ENCODE measurements at regions of chr1 and their contacts with region 1.

Region 1: DNA sequence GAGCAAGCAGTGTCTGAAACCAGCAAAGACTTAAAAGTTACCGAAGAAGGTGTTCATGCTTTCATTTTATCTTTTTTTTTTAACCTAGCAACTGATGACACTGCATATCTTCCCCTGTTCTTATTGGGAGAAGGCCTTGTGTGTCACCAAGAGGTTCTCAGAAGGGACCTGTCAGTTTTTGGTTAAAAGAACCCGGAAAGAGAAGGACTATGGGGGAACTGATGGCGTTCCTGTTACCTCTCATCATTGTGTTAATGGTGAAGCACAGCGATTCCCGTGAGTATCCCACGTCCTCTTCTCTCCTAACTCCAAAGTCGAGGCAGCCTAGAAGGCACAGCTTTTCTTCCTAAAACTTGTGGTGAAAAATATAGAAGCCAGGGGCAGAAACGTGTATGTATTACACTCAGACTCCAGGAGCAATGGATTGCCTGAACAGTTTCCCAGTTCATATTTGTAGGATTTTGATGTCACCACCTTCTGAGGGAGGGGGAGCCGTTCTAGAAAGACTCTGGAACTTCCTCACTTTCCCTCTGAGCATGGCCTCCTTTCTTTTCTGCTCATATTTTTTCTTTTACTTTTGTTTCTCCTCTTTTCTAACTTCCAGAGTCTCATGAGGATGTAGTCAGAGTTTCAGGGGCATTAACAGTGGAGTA is at the start of gene MR1:
- DNase-seq: peak; percentile 92
- ATAC-seq: peak; percentile 97
- H3K4me3 ChIP-seq: peak within 1 kb of the TSS; percentile 77 to 94 (median 90)
- H3K4me3 Mint-ChIP-seq: peak within 1 kb of the TSS; percentile 95
- H3K27ac ChIP-seq: peak within 1 kb of the TSS; percentile 94 to 96
- H3K27ac Mint-ChIP-seq: peak within 1 kb of the TSS; percentile 93
- H3K4me1 ChIP-seq: peaks cover 39 to 49% of the 10 kb centered on the region in 2 donors
- H3K4me1 Mint-ChIP-seq: peaks cover 54% of the 10 kb centered on the region
- H3K27me3 ChIP-seq: no peaks in the 10 kb centered on the region
- H3K27me3 Mint-ChIP-seq: no peaks in the 10 kb centered on the region
- CTCF ChIP-seq: no peak
- total RNA-seq, gene MR1: 26.1 and 28.2 TPM in 2 replicates

Region 2: GRCh38 chr1:180988253-180988752 is 45.6 kb before region 1 on chr1:
- CTCF ChIA-PET with region 1: no interaction called
- POLR2A ChIA-PET with region 1: no interaction called
- intact Hi-C with region 1: no loop called
- DNase-seq: no peak
- ATAC-seq: no peak
- H3K4me3 ChIP-seq: no peak overlapping the region
- H3K4me3 Mint-ChIP-seq: no peak overlapping the region
- H3K27ac ChIP-seq: no peak overlapping the region
- H3K27ac Mint-ChIP-seq: no peak overlapping the region
- H3K4me1 ChIP-seq: no peaks in the 10 kb centered on the region
- H3K4me1 Mint-ChIP-seq: no peaks in the 10 kb centered on the region
- H3K27me3 ChIP-seq: no peaks in the 10 kb centered on the region
- H3K27me3 Mint-ChIP-seq: no peaks in the 10 kb centered on the region
- CTCF ChIP-seq: no peak

Region 3: GRCh38 chr1:181077576-181078242 is 43.8 kb after region 1 on chr1:
- CTCF ChIA-PET with region 1: interaction called, 12 read pairs
- POLR2A ChIA-PET with region 1: no interaction called
- intact Hi-C with region 1: no loop called
- DNase-seq: no peak
- ATAC-seq: no peak
- H3K4me3 ChIP-seq: no peak overlapping the region
- H3K4me3 Mint-ChIP-seq: no peak overlapping the region
- H3K27ac ChIP-seq: no peak overlapping the region
- H3K27ac Mint-ChIP-seq: no peak overlapping the region
- H3K4me1 ChIP-seq: peaks cover 4% of the 10 kb centered on the region in 2 donors
- H3K4me1 Mint-ChIP-seq: peaks cover 4% of the 10 kb centered on the region
- H3K27me3 ChIP-seq: peaks cover 0 to 7% (median 0%) of the 10 kb centered on the region in 4 experiments
- H3K27me3 Mint-ChIP-seq: peaks cover 29% of the 10 kb centered on the region
- CTCF ChIP-seq: no peak

Region 4: GRCh38 chr1:181134543-181135362 is 100.8 kb after region 1 on chr1:
- CTCF ChIA-PET with region 1: interaction called, 119 read pairs
- POLR2A ChIA-PET with region 1: interaction called, 3 read pairs
- intact Hi-C with region 1: no loop called
- DNase-seq: peak; percentile 77
- ATAC-seq: peak; percentile 53
- H3K4me3 ChIP-seq: peak overlapping the region in 4 of 5 experiments; percentile 11 to 42 (median 17)
- H3K4me3 Mint-ChIP-seq: peak overlapping the region; percentile 86
- H3K27ac ChIP-seq: peak overlapping the region; percentile 91 to 92
- H3K27ac Mint-ChIP-seq: peak overlapping the region; percentile 99
- H3K4me1 ChIP-seq: peaks cover 77 to 85% of the 10 kb centered on the region in 2 donors
- H3K4me1 Mint-ChIP-seq: peaks cover 95% of the 10 kb centered on the region
- H3K27me3 ChIP-seq: no peaks in the 10 kb centered on the region
- H3K27me3 Mint-ChIP-seq: no peaks in the 10 kb centered on the region
- CTCF ChIP-seq: no peak

Region 5: GRCh38 chr1:181160998-181161870 is 127.3 kb after region 1 on chr1:
- CTCF ChIA-PET with region 1: interaction called, 17 read pairs
- POLR2A ChIA-PET with region 1: no interaction called
- intact Hi-C with region 1: loop called (anchors 1 kb)
- DNase-seq: no peak
- ATAC-seq: no peak
- H3K4me3 ChIP-seq: no peak overlapping the region
- H3K4me3 Mint-ChIP-seq: no peak overlapping the region
- H3K27ac ChIP-seq: no peak overlapping the region
- H3K27ac Mint-ChIP-seq: no peak overlapping the region
- H3K4me1 ChIP-seq: peaks cover 6 to 15% of the 10 kb centered on the region in 2 donors
- H3K4me1 Mint-ChIP-seq: peaks cover 8% of the 10 kb centered on the region
- H3K27me3 ChIP-seq: peaks cover 0 to 2% (median 0%) of the 10 kb centered on the region in 4 experiments
- H3K27me3 Mint-ChIP-seq: no peaks in the 10 kb centered on the region
- CTCF ChIP-seq: no peak

Region 6: DNA sequence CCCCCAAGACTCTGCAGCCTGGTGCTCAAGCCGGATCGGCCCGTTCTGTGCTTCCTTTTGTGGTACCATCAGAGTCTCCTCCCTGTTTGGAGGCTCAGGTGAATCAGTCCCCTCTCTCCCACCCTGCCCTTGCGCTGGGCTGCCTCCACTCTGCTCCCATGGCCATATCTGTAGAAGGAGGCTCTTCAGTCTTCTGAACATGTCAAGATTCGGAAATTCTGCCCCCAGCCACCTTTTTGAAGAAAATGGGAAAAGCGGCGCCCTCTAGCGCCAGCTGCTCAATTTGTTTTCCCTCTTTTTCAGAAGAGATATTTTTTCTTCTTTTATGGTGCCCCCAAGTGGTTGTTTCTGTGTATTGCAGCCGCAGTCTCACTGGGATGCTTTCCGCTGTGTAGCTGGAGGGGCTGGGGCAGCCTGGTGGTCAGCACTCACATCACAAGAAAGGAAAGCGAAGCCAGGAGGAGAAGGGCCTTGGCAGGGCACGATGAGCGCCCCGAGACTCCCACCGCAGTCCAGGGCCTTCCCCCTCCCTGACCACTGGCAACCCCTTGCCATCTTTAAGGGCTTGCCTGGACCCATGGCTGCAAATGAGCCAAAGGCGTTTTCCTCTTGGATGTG is 391.0 kb after region 1 on chr1:
- CTCF ChIA-PET with region 1: no interaction called
- POLR2A ChIA-PET with region 1: no interaction called
- intact Hi-C with region 1: no loop called
- DNase-seq: peak; percentile 47
- ATAC-seq: peak; percentile 54
- H3K4me3 ChIP-seq: no peak overlapping the region
- H3K4me3 Mint-ChIP-seq: no peak overlapping the region
- H3K27ac ChIP-seq: no peak overlapping the region
- H3K27ac Mint-ChIP-seq: no peak overlapping the region
- H3K4me1 ChIP-seq: no peaks in the 10 kb centered on the region
- H3K4me1 Mint-ChIP-seq: peaks cover 3% of the 10 kb centered on the region
- H3K27me3 ChIP-seq: peaks cover 0 to 15% (median 3%) of the 10 kb centered on the region in 4 experiments
- H3K27me3 Mint-ChIP-seq: peaks cover 51% of the 10 kb centered on the region
- CTCF ChIP-seq: peak; percentile 78